ENCODE measurements at regions of chr10 and their contacts with region 1.

Region 1: GRCh38 chr10:92087750-92088395 is 164.3 kb downstream of the BTAF1 start:
- DNase-seq: peak; percentile 75
- ATAC-seq: peak; percentile 100
- H3K4me3 Mint-ChIP-seq: no peak overlapping the region
- H3K27ac Mint-ChIP-seq: peak overlapping the region; percentile 84
- H3K4me1 Mint-ChIP-seq: peaks cover 23% of the 10 kb centered on the region
- H3K27me3 Mint-ChIP-seq: no peaks in the 10 kb centered on the region
- CTCF ChIP-seq: peak; percentile 48

Region 2: DNA sequence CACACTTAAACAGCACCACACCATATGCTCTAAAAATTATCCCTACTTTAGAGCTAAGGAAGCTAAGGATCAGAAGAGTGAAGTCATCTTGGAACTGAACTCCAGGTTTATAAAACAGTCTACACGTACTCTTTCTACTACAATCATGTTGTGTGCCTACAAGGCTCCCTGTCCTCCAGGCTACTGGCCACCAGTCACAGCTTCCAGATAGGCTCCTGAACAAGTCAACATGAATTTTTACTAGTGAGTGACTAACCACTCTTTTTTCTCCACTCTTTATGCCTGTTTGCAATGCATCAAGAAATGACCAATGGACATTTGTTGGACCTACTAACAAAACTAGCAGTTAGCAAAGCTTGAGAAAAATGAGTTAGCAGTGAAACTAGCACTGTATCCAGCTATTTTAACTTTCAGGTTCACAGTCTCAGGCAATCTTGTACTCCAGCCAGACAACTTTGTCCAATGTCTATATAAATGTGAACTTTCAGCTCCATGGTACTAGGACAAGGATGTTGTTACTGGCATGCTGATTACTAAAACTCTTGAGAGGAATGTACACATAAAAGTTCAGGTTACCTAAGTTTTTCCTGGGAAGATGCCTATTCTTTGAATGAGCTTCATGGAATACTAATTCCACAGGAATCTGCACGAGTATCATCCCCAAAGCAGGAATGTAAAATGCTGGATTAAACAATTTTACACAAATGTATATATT is 15.7 kb after region 1 on chr10:
- CTCF ChIA-PET with region 1: interaction called, 10 read pairs
- POLR2A ChIA-PET with region 1: no interaction called
- DNase-seq: no peak
- ATAC-seq: no peak
- H3K4me3 Mint-ChIP-seq: no peak overlapping the region
- H3K27ac Mint-ChIP-seq: no peak overlapping the region
- H3K4me1 Mint-ChIP-seq: peaks cover 11% of the 10 kb centered on the region
- H3K27me3 Mint-ChIP-seq: no peaks in the 10 kb centered on the region
- CTCF ChIP-seq: no peak

Region 3: GRCh38 chr10:92142949-92143348 is 55.1 kb after region 1 on chr10:
- CTCF ChIA-PET with region 1: no interaction called
- POLR2A ChIA-PET with region 1: no interaction called
- DNase-seq: no peak
- ATAC-seq: no peak
- H3K4me3 Mint-ChIP-seq: no peak overlapping the region
- H3K27ac Mint-ChIP-seq: no peak overlapping the region
- H3K4me1 Mint-ChIP-seq: no peaks in the 10 kb centered on the region
- H3K27me3 Mint-ChIP-seq: no peaks in the 10 kb centered on the region
- CTCF ChIP-seq: no peak

Region 4: DNA sequence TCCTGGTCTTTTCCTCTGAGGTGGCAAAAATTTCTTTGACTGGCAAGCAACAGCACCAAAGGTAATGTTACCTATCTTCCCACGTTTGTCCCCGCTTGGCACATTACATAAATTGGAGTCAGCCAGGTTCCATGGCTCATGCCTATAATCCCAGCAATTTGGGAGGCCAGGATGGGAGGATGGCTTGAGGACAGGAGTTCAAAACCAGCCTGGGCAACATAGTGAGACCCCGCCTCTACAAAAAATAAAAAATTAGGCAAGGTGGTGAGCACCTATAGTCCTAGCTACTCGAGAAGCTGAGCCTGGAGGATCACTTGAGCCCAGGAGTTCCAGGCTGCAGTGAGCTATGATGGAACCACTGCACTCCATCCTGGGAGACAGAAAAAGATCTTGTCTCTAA is 346.5 kb after region 1 on chr10:
- CTCF ChIA-PET with region 1: interaction called, 21 read pairs
- POLR2A ChIA-PET with region 1: no interaction called
- DNase-seq: no peak
- ATAC-seq: no peak
- H3K4me3 Mint-ChIP-seq: no peak overlapping the region
- H3K27ac Mint-ChIP-seq: no peak overlapping the region
- H3K4me1 Mint-ChIP-seq: peaks cover 5% of the 10 kb centered on the region
- H3K27me3 Mint-ChIP-seq: no peaks in the 10 kb centered on the region
- CTCF ChIP-seq: no peak

Measured in WTC11 (cell line).